PC-3 (cell line): ENCODE measurements at regions of chr11 and their contacts with region 1.

Region 1: GRCh38 chr11:73205661-73206343 is 12.3 kb upstream of the P2RY2 start:
- DNase-seq: no peak
- ATAC-seq: no peak
- H3K4me3 ChIP-seq: no peak overlapping the region
- H3K27ac ChIP-seq: peak overlapping the region; percentile 42
- H3K4me1 ChIP-seq: peaks cover 30% of the 10 kb centered on the region
- H3K27me3 ChIP-seq: no peaks in the 10 kb centered on the region
- CTCF ChIP-seq: no peak

Region 2: DNA sequence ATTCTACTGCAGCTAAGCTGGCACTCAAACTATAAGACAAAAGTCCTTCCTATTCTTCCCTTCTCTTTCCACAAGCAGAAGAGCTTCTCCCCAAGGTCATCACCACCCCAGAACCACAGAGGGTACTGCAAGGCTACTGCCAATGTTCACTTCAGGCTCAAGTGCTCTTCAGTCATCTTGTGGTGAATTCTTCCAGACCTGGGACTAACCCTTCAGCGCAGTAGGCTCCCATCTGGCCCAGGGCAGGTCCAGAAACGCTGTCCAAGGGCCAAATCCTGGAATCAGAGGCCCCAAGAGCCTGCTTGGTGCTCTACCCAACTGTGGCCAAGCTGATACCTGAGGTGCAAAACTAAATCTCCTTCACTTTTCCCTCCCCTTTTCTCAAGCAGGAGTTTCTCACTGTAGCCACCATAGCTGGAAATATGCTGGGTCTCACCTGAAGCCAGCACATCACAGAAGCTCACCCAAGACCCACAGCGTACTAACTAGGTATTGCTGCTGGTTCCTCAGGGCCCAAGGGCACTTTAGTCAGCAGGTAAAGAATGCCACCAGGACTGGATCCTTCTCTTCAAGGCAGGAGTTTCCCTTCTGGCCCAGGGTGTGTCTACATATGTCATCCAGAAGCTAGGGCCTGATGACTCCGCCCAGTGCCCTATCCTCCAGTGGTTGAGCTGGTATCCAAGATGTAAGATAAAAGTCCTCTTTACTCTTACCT is 91.5 kb before region 1 on chr11:
- CTCF ChIA-PET with region 1: no interaction called
- POLR2A ChIA-PET with region 1: no interaction called
- intact Hi-C with region 1: no loop called
- DNase-seq: peak; percentile 88
- ATAC-seq: no peak
- H3K4me3 ChIP-seq: no peak overlapping the region
- H3K27ac ChIP-seq: peak overlapping the region; percentile 25
- H3K4me1 ChIP-seq: peaks cover 15% of the 10 kb centered on the region
- H3K27me3 ChIP-seq: no peaks in the 10 kb centered on the region
- CTCF ChIP-seq: no peak

Region 3: DNA sequence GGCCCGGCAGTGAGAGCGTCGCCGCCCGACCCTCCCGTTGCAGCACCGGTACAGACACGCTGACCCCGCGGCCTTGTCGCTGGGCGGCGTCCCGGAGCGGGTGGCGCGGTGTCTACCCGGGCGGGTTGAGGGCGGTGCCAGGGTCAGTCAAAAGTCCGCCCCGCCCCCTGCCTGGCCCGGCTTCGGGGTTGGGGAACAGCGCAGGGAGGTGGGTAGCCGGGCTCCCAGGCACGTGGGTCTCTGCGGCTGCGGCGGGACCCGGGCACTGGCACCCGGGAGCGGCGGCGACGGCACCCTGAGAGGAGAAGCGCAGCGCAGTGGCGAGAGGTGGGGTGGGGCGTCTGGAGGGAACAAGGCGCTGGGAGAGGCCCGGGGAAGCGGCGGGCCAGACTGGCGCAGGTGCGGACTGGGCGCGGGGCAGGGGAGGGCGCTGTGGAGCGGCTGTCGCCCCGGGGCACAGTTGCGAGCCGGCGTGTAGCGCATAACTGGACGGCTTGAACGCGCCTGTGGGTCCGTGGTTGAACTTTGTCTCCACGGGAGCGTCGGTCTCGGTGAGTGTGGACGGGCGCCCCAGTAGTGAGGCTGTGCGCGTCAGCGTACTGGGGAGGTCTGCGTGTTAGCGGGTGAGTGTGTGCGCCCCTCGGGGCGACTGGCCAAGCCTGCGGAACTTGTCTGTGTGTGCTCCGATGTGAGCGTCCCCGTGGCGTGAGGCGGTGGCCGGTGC is 12.5 kb after region 1 on chr11 and contains the start of gene P2RY2:
- CTCF ChIA-PET with region 1: no interaction called
- POLR2A ChIA-PET with region 1: no interaction called
- intact Hi-C with region 1: loop called (anchors 1 kb)
- DNase-seq: peak; percentile 81
- ATAC-seq: peak; percentile 84
- H3K4me3 ChIP-seq: peak within 1 kb of the TSS; percentile 79
- H3K27ac ChIP-seq: peak within 1 kb of the TSS; percentile 33
- H3K4me1 ChIP-seq: peaks cover 37% of the 10 kb centered on the region
- H3K27me3 ChIP-seq: no peaks in the 10 kb centered on the region
- CTCF ChIP-seq: peak; percentile 80
- total RNA-seq, gene P2RY2: 54.8 and 72.9 TPM in 2 replicates

Region 4: GRCh38 chr11:73376160-73376802 is 170.5 kb after region 1 on chr11 and contains the start of gene RELT:
- CTCF ChIA-PET with region 1: no interaction called
- POLR2A ChIA-PET with region 1: no interaction called
- intact Hi-C with region 1: no loop called
- DNase-seq: peak; percentile 98
- ATAC-seq: peak; percentile 87
- H3K4me3 ChIP-seq: peak within 1 kb of the TSS; percentile 99
- H3K27ac ChIP-seq: peak within 1 kb of the TSS; percentile 39
- H3K4me1 ChIP-seq: peaks cover 28% of the 10 kb centered on the region
- H3K27me3 ChIP-seq: no peaks in the 10 kb centered on the region
- CTCF ChIP-seq: peak; percentile 89
- total RNA-seq, gene RELT: 24.5 and 34.0 TPM in 2 replicates